AG04450 (cell line): ENCODE measurements at regions of chr1 and their contacts with region 1.

Region 1: GRCh38 chr1:51897699-51898031 is 19.1 kb upstream of the NRDC start:
- DNase-seq: peak; percentile 85
- H3K4me3 ChIP-seq: no peak overlapping the region
- H3K27ac ChIP-seq: peak overlapping the region; percentile 96
- H3K27me3 ChIP-seq: no peaks in the 10 kb centered on the region
- CTCF ChIP-seq: no peak

Region 2: DNA sequence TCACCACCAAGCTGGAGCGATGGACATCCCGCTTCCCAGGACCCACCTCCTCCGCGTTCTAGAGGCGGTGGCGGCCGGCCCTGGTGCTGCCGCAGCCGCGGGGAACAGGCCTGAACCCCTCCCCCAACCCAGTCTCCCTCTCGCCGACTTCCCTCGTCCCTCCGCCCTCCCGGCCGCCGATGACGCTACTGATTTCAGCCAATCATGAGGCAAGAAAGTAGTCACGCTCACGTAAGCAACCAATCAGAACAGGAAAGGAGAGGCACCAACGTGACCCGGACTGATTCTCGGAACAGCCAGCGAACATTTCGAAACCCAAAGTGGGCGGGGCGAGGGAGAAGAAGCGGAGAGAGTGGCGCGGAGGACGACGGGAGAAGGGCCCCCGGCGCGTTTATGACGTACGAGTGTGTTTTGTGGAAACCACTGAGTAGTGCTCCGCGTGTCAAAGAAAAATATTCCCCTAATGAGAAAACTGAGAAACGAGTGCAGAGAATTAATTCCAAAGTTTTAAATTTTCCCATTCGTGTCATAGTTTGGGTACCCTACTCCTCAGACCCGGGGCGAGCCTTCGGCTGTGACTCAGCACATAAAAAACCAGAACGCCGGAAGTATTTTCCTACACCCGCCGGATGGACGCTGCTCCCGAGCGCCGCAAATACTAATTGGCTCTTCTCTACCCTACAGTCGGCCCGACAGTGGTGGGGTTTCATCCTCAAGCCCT is 18.9 kb before region 1 on chr1 and contains the start of gene NRDC:
- CTCF ChIA-PET with region 1: interaction called, 13 read pairs
- POLR2A ChIA-PET with region 1: interaction called, 3 read pairs
- DNase-seq: peak; percentile 99
- H3K4me3 ChIP-seq: peak within 1 kb of the TSS; percentile 99
- H3K27ac ChIP-seq: peak within 1 kb of the TSS; percentile 97
- H3K27me3 ChIP-seq: no peaks in the 10 kb centered on the region
- CTCF ChIP-seq: no peak
- polyA plus RNA-seq, gene NRDC: 172 and 177 TPM in 2 replicates

Region 3: GRCh38 chr1:51926171-51926812 is 28.6 kb after region 1 on chr1:
- CTCF ChIA-PET with region 1: interaction called, 26 read pairs
- POLR2A ChIA-PET with region 1: interaction called, 18 read pairs
- DNase-seq: no peak
- H3K4me3 ChIP-seq: no peak overlapping the region
- H3K27ac ChIP-seq: no peak overlapping the region
- H3K27me3 ChIP-seq: no peaks in the 10 kb centered on the region
- CTCF ChIP-seq: peak; percentile 40

Region 4: DNA sequence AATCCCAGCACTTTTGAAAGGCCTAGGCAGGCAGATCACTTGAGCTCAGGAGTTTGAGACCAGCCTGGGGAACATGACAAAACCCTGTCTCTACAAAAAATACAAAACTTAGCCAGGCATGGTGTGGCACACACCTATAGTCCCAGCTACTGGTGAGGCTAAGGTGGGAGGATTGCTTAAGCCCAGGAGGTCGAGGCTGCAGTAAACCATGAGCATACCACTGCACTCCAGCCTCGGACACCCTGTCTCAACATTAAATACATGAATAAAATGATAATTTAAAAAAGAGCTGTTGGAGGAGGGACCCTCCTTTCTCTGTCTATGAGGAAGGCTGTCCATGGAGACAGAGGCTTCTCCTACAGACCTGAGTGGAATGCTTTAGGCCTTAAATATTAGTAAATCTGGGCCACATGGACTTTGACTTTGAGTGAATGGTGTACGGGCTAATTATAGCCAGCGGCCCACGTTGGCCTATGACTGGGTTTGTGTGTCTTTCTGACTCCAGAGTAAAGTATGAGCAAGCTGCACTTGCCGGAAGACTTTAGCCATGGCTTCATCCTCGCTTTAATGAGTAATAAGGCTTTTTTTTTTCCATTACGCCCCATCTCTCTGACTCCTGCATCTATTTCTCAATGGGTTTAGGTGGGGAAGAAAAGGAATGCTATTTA is 71.5 kb after region 1 on chr1:
- CTCF ChIA-PET with region 1: interaction called, 10 read pairs
- POLR2A ChIA-PET with region 1: interaction called, 20 read pairs
- DNase-seq: peak; percentile 81
- H3K4me3 ChIP-seq: no peak overlapping the region
- H3K27ac ChIP-seq: peak overlapping the region; percentile 91
- H3K27me3 ChIP-seq: no peaks in the 10 kb centered on the region
- CTCF ChIP-seq: no peak

Region 5: GRCh38 chr1:51981556-51981955 is 83.9 kb after region 1 on chr1:
- CTCF ChIA-PET with region 1: interaction called, 11 read pairs
- POLR2A ChIA-PET with region 1: interaction called, 8 read pairs
- DNase-seq: no peak
- H3K4me3 ChIP-seq: no peak overlapping the region
- H3K27ac ChIP-seq: no peak overlapping the region
- H3K27me3 ChIP-seq: no peaks in the 10 kb centered on the region
- CTCF ChIP-seq: no peak

Region 6: GRCh38 chr1:52002038-52002917 is 104.6 kb after region 1 on chr1:
- CTCF ChIA-PET with region 1: interaction called, 33 read pairs
- POLR2A ChIA-PET with region 1: interaction called, 10 read pairs
- DNase-seq: peak; percentile 84
- H3K4me3 ChIP-seq: no peak overlapping the region
- H3K27ac ChIP-seq: no peak overlapping the region
- H3K27me3 ChIP-seq: no peaks in the 10 kb centered on the region
- CTCF ChIP-seq: peak; percentile 95